Activated naive CD4-positive, alpha-beta T cell treated with anti-CD3 and anti-CD28 coated beads for 36 hours (primary cell): ENCODE measurements at regions of chr15 and their contacts with region 1.

Region 1: DNA sequence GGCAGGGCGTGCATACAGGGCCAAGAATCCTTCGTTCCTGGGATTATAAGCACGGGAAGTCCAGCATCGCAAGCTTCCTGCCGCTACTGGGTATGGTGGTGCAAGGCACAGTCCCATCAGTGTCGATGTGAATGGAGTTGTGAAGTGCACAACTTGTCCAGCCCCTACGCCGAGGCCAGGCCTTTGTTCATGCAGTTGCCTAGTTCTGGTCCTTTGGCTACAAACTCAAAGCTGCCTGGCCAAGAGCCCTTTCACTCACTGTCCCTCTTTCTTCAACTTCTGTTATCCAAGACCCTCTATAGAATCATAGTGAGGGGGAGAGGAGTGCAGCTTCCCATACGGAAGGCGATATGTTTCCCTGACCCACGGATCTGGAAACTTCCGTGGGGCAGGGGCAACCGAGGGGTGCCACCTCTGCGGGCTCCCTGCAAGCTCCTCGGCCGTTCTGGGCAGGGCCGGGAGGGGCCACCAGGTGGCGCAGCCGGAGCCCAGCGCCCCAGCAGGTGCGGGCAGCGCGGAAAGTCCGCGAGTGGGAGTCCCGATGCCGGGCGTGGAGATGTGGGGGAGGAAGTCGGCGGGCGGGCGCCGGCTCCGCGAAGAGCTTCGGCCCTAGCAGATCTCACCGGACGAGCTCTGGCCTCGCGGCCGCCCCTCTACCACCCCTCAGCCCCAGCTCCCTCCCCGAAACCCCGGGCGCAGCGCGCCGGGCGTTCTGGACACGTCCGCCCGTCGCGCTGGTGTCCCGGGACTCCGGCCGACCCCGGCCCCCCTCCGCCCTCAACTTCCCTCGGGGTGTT is 693 bp downstream of the RASGRP1 start:
- DNase-seq: peak; percentile 88
- H3K4me3 Mint-ChIP-seq: peak overlapping the region; percentile 96
- H3K27ac Mint-ChIP-seq: peak overlapping the region; percentile 98
- H3K4me1 Mint-ChIP-seq: peaks cover 55% of the 10 kb centered on the region
- H3K27me3 Mint-ChIP-seq: no peaks in the 10 kb centered on the region

Region 2: GRCh38 chr15:38490242-38490922 is 73.5 kb before region 1 on chr15:
- CTCF ChIA-PET with region 1: interaction called, 7 read pairs
- intact Hi-C with region 1: loop called (anchors 1 kb)
- DNase-seq: no peak
- H3K4me3 Mint-ChIP-seq: no peak overlapping the region
- H3K27ac Mint-ChIP-seq: peak overlapping the region; percentile 30
- H3K4me1 Mint-ChIP-seq: peaks cover 46% of the 10 kb centered on the region
- H3K27me3 Mint-ChIP-seq: no peaks in the 10 kb centered on the region

Region 3: DNA sequence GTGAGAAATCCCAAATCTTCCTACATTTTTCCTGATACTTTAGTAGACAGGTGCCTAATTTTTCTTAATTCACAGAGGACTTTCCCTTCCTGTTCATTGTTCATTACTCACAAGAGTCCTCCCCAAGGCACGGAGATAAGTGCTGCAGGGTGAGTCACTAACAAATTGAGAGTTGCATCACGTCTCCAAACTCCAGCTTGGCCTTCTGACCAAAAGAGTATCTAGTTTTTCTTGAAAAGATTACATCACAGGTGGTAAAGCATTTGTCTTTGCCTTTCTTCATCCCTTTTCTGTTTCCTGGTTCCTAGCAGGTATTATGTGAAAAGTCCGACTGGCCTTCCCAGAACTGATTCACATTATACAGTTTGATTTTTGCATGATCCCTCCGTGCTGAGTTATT is 25.6 kb after region 1 on chr15:
- CTCF ChIA-PET with region 1: interaction called, 4 read pairs
- intact Hi-C with region 1: loop called (anchors 1 kb)
- DNase-seq: peak; percentile 51
- H3K4me3 Mint-ChIP-seq: no peak overlapping the region
- H3K27ac Mint-ChIP-seq: no peak overlapping the region
- H3K4me1 Mint-ChIP-seq: peaks cover 33% of the 10 kb centered on the region
- H3K27me3 Mint-ChIP-seq: no peaks in the 10 kb centered on the region

Region 4: GRCh38 chr15:38652998-38653397 is 89.1 kb after region 1 on chr15:
- CTCF ChIA-PET with region 1: interaction called, 44 read pairs
- intact Hi-C with region 1: loop called (anchors 1 kb)
- DNase-seq: peak; percentile 74
- H3K4me3 Mint-ChIP-seq: peak overlapping the region; percentile 66
- H3K27ac Mint-ChIP-seq: peak overlapping the region; percentile 81
- H3K4me1 Mint-ChIP-seq: peaks cover 70% of the 10 kb centered on the region
- H3K27me3 Mint-ChIP-seq: no peaks in the 10 kb centered on the region

Region 5: DNA sequence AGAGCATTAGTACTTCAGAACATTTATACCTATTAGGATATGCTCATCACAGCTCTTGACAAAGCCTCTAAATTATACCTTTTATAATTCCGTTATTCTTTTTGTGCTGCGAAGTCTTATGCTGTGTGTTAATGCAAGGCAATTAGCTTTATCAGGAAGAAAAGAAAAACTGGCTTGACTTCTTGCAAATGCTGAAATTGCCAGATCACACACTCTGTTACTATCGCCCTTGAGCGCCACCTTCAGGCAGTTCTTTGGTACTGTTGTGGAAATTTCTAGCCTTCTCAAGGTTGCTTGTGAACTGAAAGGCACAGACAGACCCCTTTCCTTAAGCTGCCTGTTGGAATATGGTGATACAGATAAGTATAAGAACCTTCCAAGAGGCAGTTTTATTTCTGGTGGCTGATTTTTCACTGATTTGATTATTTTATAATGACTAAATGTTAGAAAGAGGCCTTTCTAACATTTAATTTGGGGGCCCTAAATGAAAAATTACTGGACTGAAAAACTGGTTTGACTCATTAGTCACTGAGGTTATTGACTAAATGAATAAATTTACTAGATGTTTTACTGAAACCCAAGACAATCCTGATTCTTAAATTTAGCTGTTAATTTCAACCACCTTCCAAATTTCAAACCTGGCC is 126.9 kb after region 1 on chr15:
- CTCF ChIA-PET with region 1: interaction called, 352 read pairs
- intact Hi-C with region 1: loop called (anchors 1 kb)
- DNase-seq: peak; percentile 91
- H3K4me3 Mint-ChIP-seq: no peak overlapping the region
- H3K27ac Mint-ChIP-seq: no peak overlapping the region
- H3K4me1 Mint-ChIP-seq: peaks cover 63% of the 10 kb centered on the region
- H3K27me3 Mint-ChIP-seq: no peaks in the 10 kb centered on the region

Region 6: DNA sequence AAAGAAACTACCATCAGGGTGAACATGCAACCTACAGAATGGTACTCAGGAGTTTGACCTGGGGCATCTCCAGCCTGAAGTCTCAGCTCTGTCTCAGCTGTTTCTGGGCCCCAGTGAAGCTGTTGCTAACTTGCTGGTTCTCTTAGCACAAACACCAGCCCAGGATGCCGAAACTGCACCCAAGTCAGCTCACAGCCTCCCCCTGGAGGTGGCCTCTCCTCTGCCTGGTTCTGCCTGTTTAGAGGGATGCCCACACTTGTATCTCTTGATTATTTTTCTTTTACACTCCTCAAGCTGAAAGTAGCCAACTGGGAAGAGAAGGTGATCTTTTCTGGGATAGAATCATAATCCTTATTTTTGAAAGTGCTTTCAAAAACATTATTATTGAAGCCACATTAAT is 289.7 kb after region 1 on chr15:
- CTCF ChIA-PET with region 1: no interaction called
- intact Hi-C with region 1: no loop called
- DNase-seq: peak; percentile 42
- H3K4me3 Mint-ChIP-seq: no peak overlapping the region
- H3K27ac Mint-ChIP-seq: no peak overlapping the region
- H3K4me1 Mint-ChIP-seq: no peaks in the 10 kb centered on the region
- H3K27me3 Mint-ChIP-seq: peaks cover 17% of the 10 kb centered on the region

Region 7: GRCh38 chr15:39095218-39095879 is 531.4 kb after region 1 on chr15:
- CTCF ChIA-PET with region 1: no interaction called
- intact Hi-C with region 1: no loop called
- DNase-seq: no peak
- H3K4me3 Mint-ChIP-seq: no peak overlapping the region
- H3K27ac Mint-ChIP-seq: no peak overlapping the region
- H3K4me1 Mint-ChIP-seq: no peaks in the 10 kb centered on the region
- H3K27me3 Mint-ChIP-seq: peaks cover 3% of the 10 kb centered on the region